MCF 10A (cell line): ENCODE measurements at regions of chr14 and their contacts with region 1.

Region 1: DNA sequence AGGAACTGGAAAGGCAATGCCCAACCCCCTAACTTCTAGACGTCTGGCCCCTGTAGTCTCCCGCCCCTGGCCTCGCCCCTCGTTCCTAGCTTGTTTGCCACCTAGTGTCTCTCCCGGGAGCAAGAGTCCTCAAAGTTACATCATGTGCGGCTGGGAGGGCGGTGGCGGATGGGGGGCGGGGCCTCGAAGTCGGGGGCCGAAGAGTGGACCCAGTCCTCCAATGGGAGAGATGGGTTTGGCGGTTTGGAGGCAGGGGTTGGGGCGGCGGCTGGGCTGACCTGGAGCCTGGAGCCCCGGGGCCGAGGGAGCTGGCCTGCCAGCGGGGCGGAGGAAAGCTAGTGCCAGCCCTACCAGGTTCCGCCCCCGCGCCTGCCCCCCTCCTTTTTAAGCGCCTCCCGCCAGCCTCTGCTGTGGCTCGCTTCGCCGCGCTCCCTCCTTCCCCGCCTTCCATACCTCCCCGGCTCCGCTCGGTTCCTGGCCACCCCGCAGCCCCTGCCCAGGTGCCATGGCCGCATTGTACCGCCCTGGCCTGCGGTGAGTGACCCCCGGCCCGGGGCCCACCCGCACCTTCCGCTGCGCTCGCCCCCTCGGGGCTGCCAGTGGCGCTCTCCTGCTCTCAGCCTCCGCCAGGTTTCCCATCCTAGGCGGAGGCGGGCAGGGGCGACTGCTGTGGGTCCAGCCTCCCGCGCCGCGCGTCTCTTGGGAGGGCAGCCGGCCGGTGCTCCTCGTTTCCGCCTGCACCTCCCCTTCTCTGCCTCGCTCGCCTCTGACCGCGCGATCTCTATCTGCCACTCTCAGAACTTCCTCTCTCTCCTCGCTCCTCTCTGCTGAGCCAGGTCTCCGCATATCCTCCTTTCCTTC is at the start of gene PCK2:
- DNase-seq: peak; percentile 97
- H3K4me3 Mint-ChIP-seq: peak within 1 kb of the TSS; percentile 97
- H3K27ac Mint-ChIP-seq: peak within 1 kb of the TSS; percentile 92
- H3K4me1 Mint-ChIP-seq: peaks cover 19% of the 10 kb centered on the region
- H3K27me3 Mint-ChIP-seq: no peaks in the 10 kb centered on the region
- CTCF ChIP-seq: no peak
- total RNA-seq, gene PCK2: 64.7 and 112 TPM in 2 replicates

Region 2: DNA sequence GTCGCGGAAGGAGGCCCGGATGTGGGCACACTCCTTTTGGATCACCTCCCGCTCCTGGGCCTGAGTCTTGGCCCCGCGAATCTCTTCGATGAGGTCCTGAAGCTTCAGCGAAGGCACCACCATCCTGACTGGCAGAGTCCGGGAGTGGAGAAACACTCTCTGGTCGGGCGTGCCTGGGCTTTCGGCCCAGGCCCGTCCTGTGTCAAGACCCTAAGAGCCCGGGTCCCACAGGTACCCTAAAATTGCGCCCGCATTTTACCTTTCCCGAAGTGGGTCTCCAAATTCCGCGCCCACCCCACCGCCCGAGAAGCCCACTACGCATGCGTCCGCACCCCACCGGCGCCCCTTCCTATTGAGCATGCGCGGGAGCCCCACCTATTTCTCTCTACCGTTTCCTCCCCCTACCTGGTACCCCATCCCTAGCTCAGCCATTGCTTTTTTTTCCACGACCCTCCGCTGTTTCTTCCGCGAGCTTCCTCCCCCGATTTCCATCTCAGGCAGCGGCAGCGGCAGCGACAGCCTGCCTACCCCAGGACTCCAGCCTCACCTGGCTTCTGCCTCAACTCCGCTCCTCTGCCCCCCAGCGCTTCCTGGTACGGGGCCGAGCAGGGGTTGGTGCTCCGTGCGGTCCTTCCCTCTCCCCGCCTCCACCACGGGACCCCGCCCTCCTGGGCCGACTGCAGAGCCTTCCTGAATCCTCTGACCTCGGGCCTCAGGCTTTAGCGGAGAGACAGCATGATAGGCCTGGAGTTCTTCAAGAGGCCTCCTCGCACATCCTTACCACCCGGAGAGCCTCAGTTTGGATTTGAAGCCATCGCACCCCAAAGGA is 526.7 kb before region 1 on chr14 and contains the start of gene AP1G2:
- CTCF ChIA-PET with region 1: no interaction called
- POLR2A ChIA-PET with region 1: no interaction called
- intact Hi-C with region 1: loop called (anchors 5 kb)
- DNase-seq: peak; percentile 90
- H3K4me3 Mint-ChIP-seq: peak within 1 kb of the TSS; percentile 99
- H3K27ac Mint-ChIP-seq: peak within 1 kb of the TSS; percentile 91
- H3K4me1 Mint-ChIP-seq: peaks cover 26% of the 10 kb centered on the region
- H3K27me3 Mint-ChIP-seq: no peaks in the 10 kb centered on the region
- CTCF ChIP-seq: no peak
- total RNA-seq, gene AP1G2: 89.2 and 95.7 TPM in 2 replicates

Region 3: GRCh38 chr14:24042746-24043145 is 51.4 kb before region 1 on chr14:
- CTCF ChIA-PET with region 1: interaction called, 19 read pairs
- POLR2A ChIA-PET with region 1: no interaction called
- intact Hi-C with region 1: no loop called
- DNase-seq: no peak
- H3K4me3 Mint-ChIP-seq: no peak overlapping the region
- H3K27ac Mint-ChIP-seq: no peak overlapping the region
- H3K4me1 Mint-ChIP-seq: no peaks in the 10 kb centered on the region
- H3K27me3 Mint-ChIP-seq: peaks cover 19% of the 10 kb centered on the region
- CTCF ChIP-seq: no peak

Region 4: DNA sequence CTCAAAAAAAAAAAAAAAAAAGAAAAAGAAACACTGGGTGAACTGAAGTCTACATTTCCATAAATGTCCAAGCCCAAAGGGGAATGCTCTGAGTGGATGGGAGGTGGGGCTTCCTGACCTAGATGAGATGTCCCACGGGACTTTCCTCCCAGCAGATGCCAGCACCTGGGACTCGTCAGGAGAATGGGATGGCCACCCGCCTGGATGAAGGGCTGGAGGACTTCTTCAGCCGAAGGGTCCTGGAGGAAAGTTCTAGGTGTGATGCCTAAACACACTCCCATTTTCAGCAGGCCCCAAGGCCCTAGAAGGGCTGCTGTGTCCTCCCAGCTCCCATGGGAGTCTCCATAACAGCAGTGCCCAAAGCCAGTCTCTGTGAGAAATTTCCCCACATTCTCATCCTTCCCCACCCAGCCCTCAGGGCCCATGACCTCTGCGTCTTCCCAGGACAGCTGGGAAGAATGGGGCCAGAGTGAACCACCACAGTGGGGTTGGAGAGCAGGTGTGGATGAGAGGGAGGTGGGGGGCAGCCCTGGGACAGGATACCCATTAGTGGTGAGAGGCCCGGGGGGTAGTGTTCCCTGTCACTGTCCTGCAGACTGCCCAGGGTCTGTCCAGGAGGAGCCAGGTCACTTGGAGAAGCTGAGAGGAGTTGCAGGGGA is 29.9 kb before region 1 on chr14:
- CTCF ChIA-PET with region 1: interaction called, 61 read pairs
- POLR2A ChIA-PET with region 1: no interaction called
- intact Hi-C with region 1: no loop called
- DNase-seq: no peak
- H3K4me3 Mint-ChIP-seq: no peak overlapping the region
- H3K27ac Mint-ChIP-seq: no peak overlapping the region
- H3K4me1 Mint-ChIP-seq: no peaks in the 10 kb centered on the region
- H3K27me3 Mint-ChIP-seq: peaks cover 22% of the 10 kb centered on the region
- CTCF ChIP-seq: no peak

Region 5: GRCh38 chr14:24108336-24108874 is 14.3 kb after region 1 on chr14:
- CTCF ChIA-PET with region 1: interaction called, 272 read pairs
- POLR2A ChIA-PET with region 1: interaction called, 90 read pairs
- intact Hi-C with region 1: loop called (anchors 2 kb)
- DNase-seq: no peak
- H3K4me3 Mint-ChIP-seq: no peak overlapping the region
- H3K27ac Mint-ChIP-seq: no peak overlapping the region
- H3K4me1 Mint-ChIP-seq: peaks cover 11% of the 10 kb centered on the region
- H3K27me3 Mint-ChIP-seq: no peaks in the 10 kb centered on the region
- CTCF ChIP-seq: no peak

Region 6: DNA sequence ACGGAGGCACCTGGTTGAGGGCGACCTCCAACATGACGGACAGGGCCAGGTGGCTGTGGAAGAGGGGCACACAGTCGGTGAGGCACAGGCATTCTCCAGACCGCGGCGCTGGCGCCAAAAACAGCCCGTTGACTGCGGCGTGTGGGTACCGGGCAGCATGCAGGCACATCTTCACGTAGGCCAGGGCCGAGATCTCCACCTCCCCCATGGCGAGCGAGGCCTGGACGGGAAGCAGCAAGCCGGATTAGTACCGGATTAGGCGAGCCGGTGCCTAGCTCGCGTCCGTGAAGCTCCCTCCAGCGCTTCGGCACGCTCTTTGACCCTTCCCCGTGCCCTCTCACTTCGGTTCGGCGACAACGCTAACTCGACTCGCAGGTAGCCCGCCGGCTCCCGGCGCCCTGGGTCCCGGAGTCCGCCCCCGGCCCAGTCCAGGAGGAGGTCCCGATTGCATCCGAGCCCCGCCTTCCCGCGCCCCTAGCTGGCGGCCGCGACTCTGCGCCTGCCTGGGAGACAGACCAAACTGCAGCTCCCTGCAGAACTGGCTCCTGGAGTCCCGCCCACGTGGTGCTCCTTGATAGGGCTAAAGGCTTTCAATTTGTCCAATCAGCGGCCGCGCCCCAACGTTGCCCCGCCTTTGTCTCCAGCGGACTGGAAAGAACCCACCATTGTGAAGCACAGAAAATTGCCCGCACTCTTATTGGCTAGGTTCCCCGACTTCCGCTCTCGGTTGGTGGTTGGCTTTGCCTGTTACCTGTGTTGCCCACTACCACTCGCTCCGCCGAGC is 47.2 kb after region 1 on chr14 and contains the start of gene EMC9:
- CTCF ChIA-PET with region 1: interaction called, 3 read pairs
- POLR2A ChIA-PET with region 1: interaction called, 13 read pairs
- intact Hi-C with region 1: loop called (anchors 2 kb)
- DNase-seq: peak; percentile 100
- H3K4me3 Mint-ChIP-seq: peak within 1 kb of the TSS; percentile 93
- H3K27ac Mint-ChIP-seq: peak within 1 kb of the TSS; percentile 64
- H3K4me1 Mint-ChIP-seq: peaks cover 21% of the 10 kb centered on the region
- H3K27me3 Mint-ChIP-seq: no peaks in the 10 kb centered on the region
- CTCF ChIP-seq: peak; percentile 14
- total RNA-seq, gene EMC9: 49.2 and 49.9 TPM in 2 replicates

Region 7: DNA sequence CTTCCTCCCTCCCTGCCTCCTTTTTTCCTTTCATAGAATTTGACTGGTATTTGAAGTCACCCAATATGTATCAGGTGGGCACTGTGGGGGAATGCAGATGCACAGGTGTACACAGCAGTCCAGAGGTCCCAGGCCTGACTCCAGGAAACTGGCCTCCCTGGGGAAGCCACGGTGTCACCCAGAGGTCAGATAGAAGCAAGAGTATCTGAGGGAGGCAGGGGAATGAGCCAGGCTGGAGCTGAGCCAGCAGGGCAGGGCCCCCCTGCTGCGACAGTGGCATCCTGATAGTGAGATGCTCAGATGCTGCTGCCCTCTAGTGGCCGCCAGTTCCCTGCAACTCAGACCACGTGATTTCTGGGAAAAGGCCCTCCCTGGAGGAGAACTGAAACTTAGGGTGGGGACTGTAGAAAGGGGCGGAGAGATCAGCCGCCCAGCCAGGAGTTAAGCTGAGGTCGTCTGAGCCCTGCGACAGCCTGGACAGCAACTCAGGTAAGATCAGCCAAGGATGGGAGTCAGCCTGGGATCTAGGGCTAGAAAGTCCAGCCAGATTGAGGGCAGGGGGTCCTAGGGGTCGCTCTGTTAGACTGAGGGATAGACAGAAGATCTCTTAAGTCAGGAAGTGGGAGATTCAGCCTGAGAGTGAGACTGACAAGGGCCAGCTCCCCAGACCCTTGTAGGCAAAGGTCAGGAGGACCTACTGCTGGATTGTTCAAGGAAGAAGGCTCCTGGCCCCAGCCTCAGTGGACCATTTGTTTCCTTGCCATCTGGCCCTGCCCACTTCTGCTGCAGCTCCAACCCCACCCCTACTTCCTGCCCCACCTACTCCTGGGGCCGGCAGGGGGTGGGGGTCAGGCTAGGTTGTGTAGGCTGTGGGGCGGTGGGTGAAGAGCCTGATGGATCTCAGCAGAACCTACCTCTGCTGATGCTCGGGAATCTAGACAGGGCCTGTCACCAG is 67.0 kb after region 1 on chr14 and contains the start of gene IRF9:
- CTCF ChIA-PET with region 1: interaction called, 8 read pairs
- POLR2A ChIA-PET with region 1: no interaction called
- intact Hi-C with region 1: loop called (anchors 5 kb)
- DNase-seq: peak; percentile 95
- H3K4me3 Mint-ChIP-seq: peak within 1 kb of the TSS; percentile 88
- H3K27ac Mint-ChIP-seq: peak within 1 kb of the TSS; percentile 91
- H3K4me1 Mint-ChIP-seq: peaks cover 11% of the 10 kb centered on the region
- H3K27me3 Mint-ChIP-seq: no peaks in the 10 kb centered on the region
- CTCF ChIP-seq: peak; percentile 84
- total RNA-seq, gene IRF9: 13.6 and 23.8 TPM in 2 replicates

Region 8: DNA sequence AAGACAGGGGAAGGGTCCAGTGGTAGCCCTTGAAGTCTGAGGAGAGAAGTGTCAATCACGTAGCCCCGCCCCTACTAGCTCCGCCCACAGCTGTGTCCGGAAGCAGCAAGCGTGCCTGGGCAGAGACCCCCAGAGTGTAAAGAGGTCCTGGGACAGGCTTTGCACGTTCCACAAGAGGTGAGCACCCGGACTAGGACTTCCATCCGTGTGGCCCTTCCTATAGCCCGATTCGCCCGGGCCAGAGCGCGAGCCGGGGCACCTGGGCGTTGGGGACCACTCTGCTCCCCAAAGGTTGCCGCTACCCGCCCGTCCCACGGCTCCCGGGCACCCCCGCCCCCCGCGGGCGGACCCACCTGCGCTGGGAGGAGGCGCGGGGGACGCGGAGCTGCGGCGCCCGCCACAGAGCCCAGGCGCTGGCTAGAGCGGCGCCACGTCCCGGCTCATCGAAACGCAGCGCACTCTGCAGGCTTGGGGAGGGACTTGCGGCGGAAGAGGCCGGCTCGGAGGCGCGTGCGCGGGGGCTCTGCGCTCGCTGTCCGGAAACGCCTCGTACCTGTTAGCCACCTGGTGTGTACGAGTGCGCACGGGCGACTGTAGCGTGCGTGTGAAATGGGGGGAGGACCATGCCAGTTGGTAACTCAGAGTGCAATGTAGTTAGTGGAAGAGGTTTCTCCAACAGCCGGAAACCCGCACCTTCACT is 177.2 kb after region 1 on chr14 and contains the start of gene RABGGTA:
- CTCF ChIA-PET with region 1: no interaction called
- POLR2A ChIA-PET with region 1: no interaction called
- intact Hi-C with region 1: no loop called
- DNase-seq: peak; percentile 88
- H3K4me3 Mint-ChIP-seq: peak within 1 kb of the TSS; percentile 89
- H3K27ac Mint-ChIP-seq: peak within 1 kb of the TSS; percentile 16
- H3K4me1 Mint-ChIP-seq: peaks cover 43% of the 10 kb centered on the region
- H3K27me3 Mint-ChIP-seq: no peaks in the 10 kb centered on the region
- CTCF ChIP-seq: peak; percentile 67
- total RNA-seq, gene RABGGTA: 51.7 and 75.0 TPM in 2 replicates